ENCODE measurements at regions of chrX and their contacts with region 1.

Region 1: DNA sequence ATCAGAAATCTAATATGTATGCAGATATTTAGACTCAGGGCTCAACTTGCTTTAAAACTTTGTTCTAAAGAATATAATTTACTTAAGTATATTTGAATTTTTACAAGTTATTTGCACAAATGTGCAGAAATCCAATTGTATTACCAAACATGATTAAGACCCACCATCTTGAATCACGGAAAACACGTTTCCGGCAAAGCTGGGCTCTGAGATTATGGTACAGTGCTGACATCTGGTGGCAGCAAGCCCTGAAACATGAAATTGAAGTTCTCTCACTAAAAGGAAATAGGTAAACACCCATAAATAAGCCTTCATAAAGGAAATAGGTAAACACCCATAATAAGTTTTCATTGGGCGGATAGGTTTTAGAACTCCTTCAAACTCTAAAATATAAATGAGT is 98.3 kb upstream of the MAOA start:
- DNase-seq: peak; percentile 43 to 56
- H3K4me3 ChIP-seq: no peak overlapping the region
- H3K4me3 Mint-ChIP-seq: no peak overlapping the region
- H3K27ac Mint-ChIP-seq: no peak overlapping the region
- H3K4me1 ChIP-seq: peaks cover 9% of the 10 kb centered on the region
- H3K4me1 Mint-ChIP-seq: peaks cover 6% of the 10 kb centered on the region
- H3K27me3 ChIP-seq: no peaks in the 10 kb centered on the region
- H3K27me3 Mint-ChIP-seq: no peaks in the 10 kb centered on the region
- CTCF ChIP-seq: peak; percentile 35 to 57

Region 2: GRCh38 chrX:42680666-42681065 is 877.1 kb before region 1 on chrX:
- CTCF ChIA-PET with region 1: no interaction called
- POLR2A ChIA-PET with region 1: no interaction called
- intact Hi-C with region 1: loop called (anchors 2 kb)
- DNase-seq: no peak
- H3K4me3 ChIP-seq: no peak overlapping the region
- H3K4me3 Mint-ChIP-seq: no peak overlapping the region
- H3K27ac Mint-ChIP-seq: no peak overlapping the region
- H3K4me1 ChIP-seq: no peaks in the 10 kb centered on the region
- H3K4me1 Mint-ChIP-seq: no peaks in the 10 kb centered on the region
- H3K27me3 ChIP-seq: no peaks in the 10 kb centered on the region
- H3K27me3 Mint-ChIP-seq: no peaks in the 10 kb centered on the region
- CTCF ChIP-seq: no peak

Region 3: GRCh38 chrX:42976729-42977366 is 580.9 kb before region 1 on chrX:
- CTCF ChIA-PET with region 1: no interaction called
- POLR2A ChIA-PET with region 1: no interaction called
- intact Hi-C with region 1: loop called (anchors 10 kb)
- DNase-seq: peak; percentile 64 to 81
- H3K4me3 ChIP-seq: no peak overlapping the region
- H3K4me3 Mint-ChIP-seq: no peak overlapping the region
- H3K27ac Mint-ChIP-seq: peak overlapping the region; percentile 73
- H3K4me1 ChIP-seq: peaks cover 23% of the 10 kb centered on the region
- H3K4me1 Mint-ChIP-seq: no peaks in the 10 kb centered on the region
- H3K27me3 ChIP-seq: no peaks in the 10 kb centered on the region
- H3K27me3 Mint-ChIP-seq: no peaks in the 10 kb centered on the region
- CTCF ChIP-seq: no peak

Region 4: DNA sequence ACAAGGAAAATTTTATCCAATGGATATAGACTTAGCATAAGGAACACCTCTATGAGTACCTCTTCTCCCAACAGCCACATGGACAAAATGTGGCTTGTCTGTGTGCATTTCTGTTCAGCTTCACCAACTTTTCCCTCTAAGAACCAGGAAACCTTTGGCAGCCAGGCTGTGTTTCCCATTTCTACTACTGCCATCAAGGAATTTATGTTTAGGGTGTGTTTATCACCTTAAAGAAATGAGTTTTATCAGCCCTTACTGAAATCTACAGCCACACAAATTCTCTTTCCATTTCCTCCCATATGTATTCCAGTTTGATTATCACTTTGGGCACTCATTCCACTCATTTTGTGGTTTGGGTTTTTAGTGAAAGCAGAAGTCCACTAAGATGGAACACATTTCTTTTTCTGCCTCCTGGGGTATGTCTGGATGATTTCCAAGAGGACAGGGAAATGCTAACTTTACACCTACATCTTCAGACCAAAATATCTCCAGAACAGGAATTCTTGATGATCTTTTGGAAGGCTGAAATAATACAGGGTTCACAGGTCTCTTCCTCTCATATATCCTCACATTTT is 15.7 kb after region 1 on chrX:
- CTCF ChIA-PET with region 1: no interaction called
- POLR2A ChIA-PET with region 1: no interaction called
- intact Hi-C with region 1: no loop called
- DNase-seq: no peak
- H3K4me3 ChIP-seq: no peak overlapping the region
- H3K4me3 Mint-ChIP-seq: no peak overlapping the region
- H3K27ac Mint-ChIP-seq: no peak overlapping the region
- H3K4me1 ChIP-seq: no peaks in the 10 kb centered on the region
- H3K4me1 Mint-ChIP-seq: no peaks in the 10 kb centered on the region
- H3K27me3 ChIP-seq: no peaks in the 10 kb centered on the region
- H3K27me3 Mint-ChIP-seq: no peaks in the 10 kb centered on the region
- CTCF ChIP-seq: no peak

Region 5: DNA sequence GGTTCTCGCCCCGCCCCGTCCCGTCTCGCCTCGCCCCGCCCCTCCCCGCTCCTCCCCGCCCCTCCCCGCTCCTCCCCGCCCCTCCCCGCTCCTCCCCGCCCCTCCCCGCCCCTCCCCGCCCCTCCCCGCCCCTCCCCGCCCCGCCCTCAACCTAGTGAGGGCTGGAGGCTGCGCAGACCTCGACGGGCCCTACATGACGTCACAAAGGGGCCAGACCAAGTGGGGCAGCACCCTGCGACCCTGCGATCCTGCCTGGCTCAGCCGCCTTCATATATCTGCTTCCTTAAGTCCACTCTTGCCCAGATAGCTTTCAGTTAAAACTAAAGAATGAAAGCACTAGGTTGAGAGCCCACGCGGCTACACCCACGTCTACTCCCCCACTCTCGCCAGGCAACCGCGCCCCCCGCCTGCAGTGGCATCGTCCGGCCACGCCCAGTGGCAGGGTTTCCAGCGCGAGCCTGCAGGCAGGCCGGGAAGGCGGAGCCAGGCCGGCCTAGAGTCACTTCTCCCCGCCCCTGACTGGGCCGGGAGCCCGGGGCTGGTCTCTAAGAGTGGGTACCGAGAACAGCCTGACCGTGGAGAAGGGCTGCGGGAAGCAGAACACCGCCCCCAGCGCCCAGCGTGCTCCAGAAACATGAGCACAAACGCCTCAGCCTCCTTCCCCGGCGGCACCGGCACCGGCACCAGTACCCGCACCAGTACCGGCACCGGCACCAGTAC is 96.8 kb after region 1 on chrX:
- CTCF ChIA-PET with region 1: no interaction called
- POLR2A ChIA-PET with region 1: no interaction called
- intact Hi-C with region 1: loop called (anchors 10 kb)
- DNase-seq: peak; percentile 92
- H3K4me3 ChIP-seq: peak overlapping the region; percentile 46
- H3K4me3 Mint-ChIP-seq: peak overlapping the region; percentile 73
- H3K27ac Mint-ChIP-seq: peak overlapping the region; percentile 94
- H3K4me1 ChIP-seq: no peaks in the 10 kb centered on the region
- H3K4me1 Mint-ChIP-seq: no peaks in the 10 kb centered on the region
- H3K27me3 ChIP-seq: no peaks in the 10 kb centered on the region
- H3K27me3 Mint-ChIP-seq: no peaks in the 10 kb centered on the region
- CTCF ChIP-seq: peak in 1 of 2 experiments; percentile 33

Region 6: GRCh38 chrX:43750248-43750676 is 192.5 kb after region 1 on chrX:
- CTCF ChIA-PET with region 1: interaction called, 7 read pairs
- POLR2A ChIA-PET with region 1: no interaction called
- intact Hi-C with region 1: loop called (anchors 1 kb)
- DNase-seq: peak; percentile 45 to 46
- H3K4me3 ChIP-seq: no peak overlapping the region
- H3K4me3 Mint-ChIP-seq: no peak overlapping the region
- H3K27ac Mint-ChIP-seq: no peak overlapping the region
- H3K4me1 ChIP-seq: no peaks in the 10 kb centered on the region
- H3K4me1 Mint-ChIP-seq: no peaks in the 10 kb centered on the region
- H3K27me3 ChIP-seq: no peaks in the 10 kb centered on the region
- H3K27me3 Mint-ChIP-seq: no peaks in the 10 kb centered on the region
- CTCF ChIP-seq: peak; percentile 26 to 53

Region 7: GRCh38 chrX:44343412-44344141 is 785.8 kb after region 1 on chrX and contains the start of gene EFHC2:
- CTCF ChIA-PET with region 1: no interaction called
- POLR2A ChIA-PET with region 1: no interaction called
- intact Hi-C with region 1: no loop called
- DNase-seq: no peak
- H3K4me3 ChIP-seq: no peak within 1 kb of the TSS
- H3K4me3 Mint-ChIP-seq: no peak within 1 kb of the TSS
- H3K27ac Mint-ChIP-seq: no peak within 1 kb of the TSS
- H3K4me1 ChIP-seq: no peaks in the 10 kb centered on the region
- H3K4me1 Mint-ChIP-seq: no peaks in the 10 kb centered on the region
- H3K27me3 ChIP-seq: no peaks in the 10 kb centered on the region
- H3K27me3 Mint-ChIP-seq: no peaks in the 10 kb centered on the region
- CTCF ChIP-seq: no peak
- total RNA-seq, gene EFHC2: not detected in 2 replicates

Measured in Caco-2 (cell line).